ENCODE measurements at regions of chr6 and their contacts with region 1.

Region 1: DNA sequence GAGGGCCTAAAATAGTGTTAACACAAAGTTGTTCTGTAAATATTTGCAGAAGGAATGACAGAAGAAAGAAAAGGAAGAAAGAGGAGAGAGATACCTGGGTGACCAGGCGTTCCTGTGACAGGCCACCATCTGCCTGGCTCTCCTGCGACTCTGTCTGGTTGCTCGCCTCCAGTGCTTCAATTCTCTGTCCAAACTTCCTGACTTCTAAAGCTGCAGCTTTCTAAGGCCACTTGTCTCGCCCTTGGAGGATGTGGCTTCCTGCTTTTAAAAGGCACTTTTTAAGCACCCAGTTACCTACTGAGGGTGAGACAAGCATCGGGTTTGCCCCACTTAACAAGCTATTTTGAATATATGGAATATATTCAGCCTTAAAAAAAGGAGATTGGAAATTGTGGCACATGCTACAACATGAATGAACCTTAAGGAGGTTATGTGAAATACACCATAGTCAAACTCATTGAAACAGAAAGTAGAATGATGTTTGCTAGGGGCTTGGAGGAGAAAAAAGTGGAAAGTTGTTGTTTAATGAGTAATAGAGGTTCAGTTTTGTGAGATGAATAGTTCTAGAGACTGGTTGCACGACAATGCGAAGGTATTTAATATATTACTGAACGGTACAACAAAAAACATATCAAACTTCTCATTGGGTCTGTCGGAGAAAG is 32.8 kb downstream of the VIP start:
- DNase-seq: no peak
- H3K4me3 ChIP-seq: no peak overlapping the region
- H3K27ac ChIP-seq: no peak overlapping the region
- H3K4me1 ChIP-seq: no peaks in the 10 kb centered on the region
- H3K27me3 ChIP-seq: no peaks in the 10 kb centered on the region
- CTCF ChIP-seq: no peak
- POLR2A ChIP-seq: no peak

Region 2: GRCh38 chr6:152821525-152821924 is 38.2 kb after region 1 on chr6:
- intact Hi-C with region 1: loop called (anchors 5 kb)
- DNase-seq: no peak
- H3K4me3 ChIP-seq: no peak overlapping the region
- H3K27ac ChIP-seq: no peak overlapping the region
- H3K4me1 ChIP-seq: no peaks in the 10 kb centered on the region
- H3K27me3 ChIP-seq: no peaks in the 10 kb centered on the region
- CTCF ChIP-seq: no peak
- POLR2A ChIP-seq: no peak

Region 3: DNA sequence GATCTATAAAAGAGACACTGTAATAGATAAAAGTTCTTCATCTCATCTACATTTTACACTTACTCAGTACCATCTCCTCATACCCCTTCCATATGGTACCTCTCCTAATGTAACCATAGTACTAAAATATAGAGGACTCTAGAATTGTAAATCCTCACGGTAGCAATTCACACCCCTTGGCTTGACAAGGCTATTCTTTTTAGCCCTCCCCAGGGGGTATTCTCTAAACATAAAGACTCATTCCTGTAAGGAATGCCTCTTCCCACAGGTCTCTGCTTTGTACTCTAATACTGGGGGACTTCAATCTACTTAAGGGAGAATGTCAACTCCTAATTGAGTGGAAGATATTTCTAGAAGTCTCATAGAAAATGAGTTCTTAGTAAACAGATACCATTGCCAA is 53.2 kb after region 1 on chr6:
- intact Hi-C with region 1: loop called (anchors 2 kb)
- DNase-seq: no peak
- H3K4me3 ChIP-seq: no peak overlapping the region
- H3K27ac ChIP-seq: no peak overlapping the region
- H3K4me1 ChIP-seq: no peaks in the 10 kb centered on the region
- H3K27me3 ChIP-seq: no peaks in the 10 kb centered on the region
- CTCF ChIP-seq: no peak
- POLR2A ChIP-seq: no peak

Measured in breast epithelium (tissue), 4 donors.